A673 (cell line): ENCODE measurements at regions of chr15 and their contacts with region 1.

Region 1: GRCh38 chr15:76866716-76867321 is 38.3 kb downstream of the SCAPER start:
- DNase-seq: peak; percentile 63
- H3K4me3 ChIP-seq: no peak overlapping the region
- H3K27ac ChIP-seq: no peak overlapping the region
- H3K4me1 ChIP-seq: peaks cover 4% of the 10 kb centered on the region
- H3K27me3 ChIP-seq: no peaks in the 10 kb centered on the region
- CTCF ChIP-seq: peak; percentile 71

Region 2: DNA sequence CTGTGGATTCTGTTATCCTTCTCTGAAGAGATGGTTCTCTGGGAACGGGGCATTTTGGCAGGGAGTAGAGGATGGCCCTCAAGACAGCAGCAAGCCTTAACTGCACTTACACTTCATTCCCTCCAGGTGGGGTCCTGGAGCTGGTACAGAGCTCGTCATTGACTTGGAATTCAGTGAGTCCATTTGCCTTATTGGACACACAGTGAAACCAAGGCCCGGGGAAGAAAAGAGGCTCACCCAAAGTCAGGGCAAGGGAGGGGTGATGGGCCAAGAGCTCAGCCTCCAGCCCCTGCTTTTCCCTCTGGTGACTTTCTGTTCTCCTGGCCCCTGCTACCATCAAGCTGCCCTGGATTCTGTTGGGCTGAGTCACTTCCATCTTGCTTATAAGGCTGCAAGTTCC is 681.1 kb before region 1 on chr15:
- CTCF ChIA-PET with region 1: no interaction called
- POLR2A ChIA-PET with region 1: no interaction called
- intact Hi-C with region 1: loop called (anchors 2 kb)
- DNase-seq: peak; percentile 86
- H3K4me3 ChIP-seq: no peak overlapping the region
- H3K27ac ChIP-seq: no peak overlapping the region
- H3K4me1 ChIP-seq: no peaks in the 10 kb centered on the region
- H3K27me3 ChIP-seq: no peaks in the 10 kb centered on the region
- CTCF ChIP-seq: peak; percentile 75

Region 3: DNA sequence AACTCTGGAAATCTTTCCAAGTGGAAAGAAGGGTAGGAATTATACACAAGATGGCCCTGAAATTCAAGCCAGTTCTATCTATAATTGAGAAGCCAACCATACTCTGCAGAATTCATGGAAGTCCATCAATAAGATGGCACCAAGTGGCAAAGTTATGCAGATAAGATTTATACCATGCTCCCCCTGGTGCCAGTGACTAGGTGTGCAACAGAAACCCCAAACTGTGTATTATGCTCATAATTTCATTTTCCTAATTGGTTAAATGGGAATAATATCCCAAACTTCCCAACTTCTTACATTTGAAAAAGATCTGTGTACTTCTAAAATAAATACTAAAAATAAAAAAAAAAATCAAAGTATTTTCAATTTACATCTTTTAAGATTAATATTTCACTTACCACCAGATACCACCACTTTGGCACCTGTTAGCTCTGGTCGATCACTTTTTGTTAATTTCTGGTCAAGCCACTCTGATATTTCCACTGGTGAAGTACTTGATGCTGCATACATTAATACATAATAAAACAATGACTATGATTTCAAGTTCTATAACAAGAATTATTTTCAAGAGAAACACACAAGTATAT is 581.5 kb before region 1 on chr15:
- CTCF ChIA-PET with region 1: interaction called, 10 read pairs
- POLR2A ChIA-PET with region 1: no interaction called
- intact Hi-C with region 1: no loop called
- DNase-seq: peak; percentile 40
- H3K4me3 ChIP-seq: no peak overlapping the region
- H3K27ac ChIP-seq: no peak overlapping the region
- H3K4me1 ChIP-seq: no peaks in the 10 kb centered on the region
- H3K27me3 ChIP-seq: no peaks in the 10 kb centered on the region
- CTCF ChIP-seq: peak; percentile 65